ENCODE measurements at regions of chr4 and their contacts with region 1.

Region 1: DNA sequence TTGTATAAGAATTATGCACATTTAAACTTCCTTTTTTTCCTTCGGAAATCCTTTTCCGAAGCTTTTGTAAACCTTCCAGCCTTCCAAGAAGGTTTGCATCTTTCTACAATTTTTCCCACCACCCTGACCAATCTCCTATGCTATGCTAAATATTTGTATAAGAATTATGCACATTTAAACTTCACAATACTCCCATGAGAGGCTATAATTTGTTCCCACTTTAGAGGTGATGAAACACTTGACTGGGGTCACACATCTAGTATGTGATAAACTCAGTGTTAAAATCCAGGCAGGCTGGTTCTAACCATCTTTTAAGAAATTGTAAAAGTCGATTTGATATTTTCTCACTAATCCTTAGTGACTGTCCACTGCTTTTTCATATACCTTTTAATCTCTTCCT is 22.1 kb downstream of the NUDT6 start:
- DNase-seq: no peak
- H3K4me3 ChIP-seq: no peak overlapping the region
- H3K4me1 ChIP-seq: no peaks in the 10 kb centered on the region; the same call in 1 of the 2 replicates
- H3K27me3 ChIP-seq: no peaks in the 10 kb centered on the region

Region 2: GRCh38 chr4:122552898-122553297 is 347.4 kb before region 1 on chr4:
- in situ Hi-C with region 1: no loop called
- DNase-seq: no peak
- H3K4me3 ChIP-seq: no peak overlapping the region
- H3K4me1 ChIP-seq: no peaks in the 10 kb centered on the region; the same call in 1 of the 2 replicates
- H3K27me3 ChIP-seq: peaks cover 9% of the 10 kb centered on the region

Region 3: DNA sequence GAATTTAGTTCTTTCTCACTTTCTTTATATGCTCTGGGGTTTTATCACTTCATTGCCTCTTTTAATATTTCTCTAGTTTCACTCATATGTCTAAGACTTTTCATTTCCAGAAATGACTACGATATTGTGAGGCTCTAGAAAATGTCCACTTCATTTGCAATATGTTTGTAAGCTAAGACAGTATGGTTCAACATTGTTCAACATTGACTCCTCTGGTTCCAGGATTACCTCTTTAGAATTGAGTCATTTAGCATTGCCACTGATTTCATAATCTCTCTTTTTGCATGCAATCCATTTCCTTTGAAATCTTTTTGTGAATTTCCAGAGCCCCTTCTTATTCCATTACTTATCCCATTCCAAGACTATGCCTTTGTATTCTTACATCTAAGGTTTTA is 135.5 kb before region 1 on chr4:
- in situ Hi-C with region 1: loop called (anchors 10 kb)
- DNase-seq: peak in 1 of 2 experiments; percentile 94
- H3K4me3 ChIP-seq: no peak overlapping the region
- H3K4me1 ChIP-seq: peaks cover 43% of the 10 kb centered on the region
- H3K27me3 ChIP-seq: no peaks in the 10 kb centered on the region

Measured in HAP-1 (cell line).